ENCODE measurements at regions of chr20 and their contacts with region 1.

Region 1: GRCh38 chr20:31937820-31938219 is 14.0 kb downstream of the PDRG1 start:
- DNase-seq: no peak
- H3K4me3 ChIP-seq: no peak overlapping the region
- H3K27ac ChIP-seq: no peak overlapping the region
- H3K4me1 ChIP-seq: no peaks in the 10 kb centered on the region
- H3K27me3 ChIP-seq: no peaks in the 10 kb centered on the region
- CTCF ChIP-seq: no peak

Region 2: DNA sequence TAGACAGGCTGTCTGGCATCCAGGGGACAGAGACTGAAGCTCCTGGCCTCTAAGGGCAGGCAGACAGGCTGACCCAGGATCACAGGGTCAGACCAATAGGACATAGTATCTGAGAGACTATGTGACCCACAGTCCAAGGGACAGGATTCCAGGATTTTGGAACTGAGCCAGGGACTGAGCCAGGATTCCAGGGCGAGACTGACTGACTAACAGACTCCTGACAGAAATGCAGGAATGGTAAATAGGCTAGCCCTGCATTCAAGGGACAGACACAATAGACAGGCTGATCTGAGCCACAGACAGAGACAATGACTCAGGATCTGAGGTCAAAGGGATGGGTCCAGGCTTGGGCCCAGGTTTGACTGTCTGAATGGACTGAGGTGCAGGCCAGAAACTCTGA is 49.9 kb after region 1 on chr20:
- CTCF ChIA-PET with region 1: no interaction called
- POLR2A ChIA-PET with region 1: no interaction called
- intact Hi-C with region 1: no loop called
- DNase-seq: no peak
- H3K4me3 ChIP-seq: no peak overlapping the region
- H3K27ac ChIP-seq: no peak overlapping the region
- H3K4me1 ChIP-seq: no peaks in the 10 kb centered on the region
- H3K27me3 ChIP-seq: peaks cover 3% of the 10 kb centered on the region
- CTCF ChIP-seq: no peak

Region 3: GRCh38 chr20:32012159-32012688 is 74.4 kb after region 1 on chr20:
- CTCF ChIA-PET with region 1: no interaction called
- POLR2A ChIA-PET with region 1: interaction called, 12 read pairs
- intact Hi-C with region 1: no loop called
- DNase-seq: no peak
- H3K4me3 ChIP-seq: no peak overlapping the region
- H3K27ac ChIP-seq: no peak overlapping the region
- H3K4me1 ChIP-seq: peaks cover 5% of the 10 kb centered on the region
- H3K27me3 ChIP-seq: peaks cover 3% of the 10 kb centered on the region
- CTCF ChIP-seq: no peak

Region 4: DNA sequence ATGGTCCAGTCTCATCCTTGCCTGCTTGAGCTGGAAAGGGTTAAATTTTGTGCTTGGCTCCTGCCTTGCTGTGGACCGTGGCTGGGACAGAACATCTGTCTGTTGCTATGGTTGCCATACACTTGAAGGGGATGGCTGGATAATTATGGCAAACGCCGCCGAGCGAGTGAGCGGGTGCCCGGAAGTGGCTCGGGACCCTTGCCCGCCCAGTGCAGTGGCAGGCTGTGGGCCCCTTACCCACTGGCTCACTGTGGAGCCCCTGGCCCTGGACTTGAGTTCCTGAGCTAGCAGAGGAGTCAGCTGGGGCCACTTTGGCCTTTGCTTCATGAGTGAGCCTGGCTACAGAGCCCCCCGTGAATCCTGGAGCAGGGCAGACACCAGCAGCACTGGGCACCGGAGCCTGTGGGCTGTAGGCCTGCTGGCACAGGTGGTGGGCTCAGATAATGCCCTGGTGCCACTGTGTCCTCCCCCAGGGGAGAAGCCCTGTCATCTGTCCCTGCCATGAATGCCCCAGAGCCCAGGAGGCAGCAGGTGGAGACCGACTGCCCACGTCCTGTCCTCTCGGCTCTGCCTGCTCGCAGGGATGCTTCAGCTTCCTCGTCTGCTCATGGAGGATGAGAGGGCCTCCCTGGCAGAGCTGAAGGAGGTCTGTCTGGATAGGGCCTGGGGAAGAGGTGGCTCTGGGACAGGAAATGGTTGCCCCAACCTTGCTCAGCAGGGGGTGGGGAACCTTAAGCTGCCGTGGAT is 672.8 kb after region 1 on chr20:
- CTCF ChIA-PET with region 1: no interaction called
- POLR2A ChIA-PET with region 1: no interaction called
- intact Hi-C with region 1: no loop called
- DNase-seq: peak; percentile 26
- H3K4me3 ChIP-seq: no peak overlapping the region
- H3K27ac ChIP-seq: no peak overlapping the region
- H3K4me1 ChIP-seq: no peaks in the 10 kb centered on the region
- H3K27me3 ChIP-seq: no peaks in the 10 kb centered on the region
- CTCF ChIP-seq: no peak

Measured in A673 (cell line).